ENCODE measurements at regions of chr9 and their contacts with region 1.

Region 1: DNA sequence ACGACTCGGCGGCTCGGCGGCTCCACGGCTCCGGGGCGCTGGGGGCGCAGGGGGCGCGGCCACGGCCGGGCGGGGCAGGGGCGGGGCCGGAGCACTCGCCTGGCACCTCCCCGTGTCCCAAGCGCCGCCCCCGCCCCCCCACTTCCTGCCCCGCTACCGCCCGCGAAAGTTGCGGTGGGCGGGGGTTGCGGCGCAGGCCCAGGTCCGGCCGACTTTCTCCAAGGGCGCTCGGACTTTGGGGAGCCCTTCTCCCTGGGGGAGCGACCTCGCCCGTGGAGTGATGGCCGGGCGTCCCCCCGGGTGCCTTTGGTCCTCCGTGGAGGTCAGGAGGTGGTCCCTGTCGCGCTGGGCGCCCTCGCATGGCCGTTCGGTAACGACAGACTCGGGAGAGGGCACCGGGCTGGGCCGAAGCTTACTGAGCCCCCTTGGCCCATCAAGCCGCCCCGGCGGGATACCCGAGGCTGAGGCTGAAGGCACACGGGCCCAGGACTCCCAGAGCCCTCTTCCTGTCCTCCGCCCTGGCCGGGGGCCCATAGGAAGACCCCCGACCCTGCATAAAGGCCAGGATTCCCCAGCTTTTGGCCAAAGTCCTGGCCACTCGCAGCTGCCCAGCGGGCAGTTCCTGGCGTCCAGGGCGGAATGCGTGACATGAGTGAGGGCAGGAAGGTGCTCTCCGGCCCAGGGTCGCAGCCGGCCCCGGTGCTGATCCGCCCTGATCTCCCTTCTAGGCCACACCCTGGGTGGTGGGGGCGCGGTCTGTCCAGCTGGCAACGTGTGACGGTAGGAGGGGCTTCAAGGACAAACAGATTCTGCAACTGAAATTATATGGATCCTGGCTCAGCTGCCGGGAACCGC is 883 bp upstream of the VAV2 start:
- DNase-seq: peak; percentile 80

Region 2: GRCh38 chr9:133782157-133783130 is 210.6 kb before region 1 on chr9:
- CTCF ChIA-PET with region 1: interaction called, 23 read pairs
- POLR2A ChIA-PET with region 1: interaction called, 3 read pairs
- DNase-seq: peak; percentile 82

Measured in HEK293T (cell line).